ENCODE measurements at regions of chr4 and their contacts with region 1.

Region 1: GRCh38 chr4:21790438-21791029 is 158.0 kb downstream of the KCNIP4 start:
- DNase-seq: no peak
- H3K4me3 Mint-ChIP-seq: no peak overlapping the region
- H3K27ac Mint-ChIP-seq: no peak overlapping the region
- H3K4me1 Mint-ChIP-seq: no peaks in the 10 kb centered on the region
- H3K27me3 Mint-ChIP-seq: no peaks in the 10 kb centered on the region

Region 2: GRCh38 chr4:22688236-22688635 is 897.7 kb after region 1 on chr4:
- intact Hi-C with region 1: loop called (anchors 1 kb)
- DNase-seq: no peak
- H3K4me3 Mint-ChIP-seq: no peak overlapping the region
- H3K27ac Mint-ChIP-seq: no peak overlapping the region
- H3K4me1 Mint-ChIP-seq: peaks cover 3% of the 10 kb centered on the region
- H3K27me3 Mint-ChIP-seq: peaks cover 6% of the 10 kb centered on the region

Measured in activated CD4-positive, alpha-beta T cell treated with anti-CD3 and anti-CD28 coated beads, Interleukin-2, amount 10 ng/mL, durations not matched to agents 24 days and 14 days (primary cell).